Endothelial cell of umbilical vein (primary cell): ENCODE measurements at regions of chr1 and their contacts with region 1.

Region 1: GRCh38 chr1:169546087-169546995 is 39.9 kb downstream of the F5 start:
- DNase-seq: peak; percentile 66
- H3K4me3 ChIP-seq: no peak overlapping the region
- H3K27ac ChIP-seq: no peak overlapping the region
- H3K4me1 ChIP-seq: no peaks in the 10 kb centered on the region
- H3K27me3 ChIP-seq: peaks cover 0 to 2% of the 10 kb centered on the region in 2 experiments
- CTCF ChIP-seq: peak; percentile 63 to 66
- POLR2A ChIP-seq: no peak

Region 2: DNA sequence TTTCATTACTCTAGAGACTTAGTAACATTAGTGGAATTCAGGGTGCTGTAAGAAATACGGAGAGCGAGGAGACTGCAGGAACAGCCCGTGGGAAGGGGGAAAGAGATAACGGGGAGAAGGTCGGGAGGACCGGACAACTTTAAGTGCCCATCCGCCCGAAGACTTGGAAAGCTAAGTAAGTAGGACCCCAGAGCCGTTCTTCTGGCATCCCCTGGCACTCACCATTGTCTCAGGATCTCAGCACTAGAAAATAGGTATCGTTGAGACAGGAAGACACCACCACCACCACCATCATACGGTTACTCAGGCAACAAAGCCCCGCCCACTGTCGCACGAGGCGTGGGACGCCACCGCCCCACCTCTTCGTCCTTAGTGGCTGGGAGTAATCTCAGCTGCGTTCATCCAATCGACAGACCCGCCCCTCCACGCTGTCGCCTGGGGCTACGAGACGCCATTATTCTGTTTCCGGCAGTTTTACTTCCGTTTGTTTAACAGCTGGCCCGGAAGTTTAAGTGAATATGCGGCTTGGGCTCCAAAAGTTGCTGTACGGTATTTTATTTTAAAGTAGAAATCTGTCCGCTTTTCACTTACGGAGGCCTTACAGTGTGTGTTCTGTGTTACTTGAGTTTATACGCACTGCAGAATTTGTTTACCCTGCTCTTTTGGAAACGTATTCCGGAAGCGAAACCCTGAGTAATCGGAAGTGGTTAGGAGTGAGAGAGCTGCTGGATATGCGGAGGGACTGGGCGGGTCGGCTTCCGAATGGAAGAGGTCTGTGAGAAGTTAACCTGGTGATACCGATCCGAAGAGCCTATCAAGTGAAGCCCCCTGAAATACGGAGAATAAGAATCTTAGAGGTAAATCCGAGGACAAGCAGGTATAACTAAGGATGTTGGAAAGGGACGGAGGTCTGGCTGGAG is 178.6 kb before region 1 on chr1 and contains the starts of genes BLZF1 and NME7:
- CTCF ChIA-PET with region 1: interaction called, 14 read pairs
- POLR2A ChIA-PET with region 1: no interaction called
- dilution Hi-C with region 1: no loop called
- intact Hi-C with region 1: loop called (anchors 2 kb)
- DNase-seq: peak; percentile 98
- H3K4me3 ChIP-seq: peak within 1 kb of the TSS; percentile 97 to 100 (median 98)
- H3K27ac ChIP-seq: peak within 1 kb of the TSS; percentile 96
- H3K4me1 ChIP-seq: peaks cover 19% of the 10 kb centered on the region
- H3K27me3 ChIP-seq: no peaks in the 10 kb centered on the region
- CTCF ChIP-seq: no peak
- POLR2A ChIP-seq: peak; percentile 84
- total RNA-seq, gene BLZF1: 19.7 and 21.2 TPM in 2 replicates
- total RNA-seq, gene NME7: 25.0 and 25.3 TPM in 2 replicates

Region 3: DNA sequence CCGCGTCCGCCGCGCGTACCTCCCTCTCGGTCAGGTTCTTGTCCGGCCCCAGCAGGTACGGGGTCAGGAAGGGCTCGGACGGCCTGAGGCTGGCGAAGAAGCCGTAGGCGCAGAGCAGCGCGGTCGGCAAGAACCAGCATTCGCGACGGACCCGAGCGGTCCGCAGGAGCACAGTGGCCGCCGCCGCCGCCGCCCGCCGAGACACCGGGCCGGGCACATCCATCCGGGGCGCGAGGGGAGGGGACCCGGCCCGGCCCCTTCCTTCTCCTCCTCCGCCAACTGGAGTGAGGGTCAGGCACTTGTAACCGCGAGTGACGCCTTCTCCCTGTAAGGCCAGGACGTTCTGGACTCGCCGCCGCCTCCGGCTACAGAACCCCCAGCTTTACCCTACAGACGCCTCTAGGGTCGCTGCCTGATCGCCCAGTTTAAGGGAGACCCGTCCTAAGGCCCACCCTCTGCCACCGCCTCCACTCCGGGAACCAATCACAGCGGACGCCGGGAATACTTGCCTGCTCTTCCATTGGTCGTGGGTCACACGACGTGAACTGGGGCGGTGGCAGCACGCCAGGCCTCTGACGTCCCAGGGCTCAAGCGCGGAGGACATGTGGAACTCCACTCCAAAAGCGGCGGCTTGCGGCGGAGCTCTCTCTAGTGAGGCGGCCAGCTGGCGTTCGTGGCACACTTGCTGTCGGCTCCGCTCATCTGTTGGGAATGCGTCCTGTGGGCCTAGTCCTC is 60.6 kb before region 1 on chr1 and contains the start of gene SLC19A2:
- CTCF ChIA-PET with region 1: interaction called, 22 read pairs
- POLR2A ChIA-PET with region 1: no interaction called
- dilution Hi-C with region 1: no loop called
- intact Hi-C with region 1: loop called (anchors 1 kb)
- DNase-seq: peak; percentile 99
- H3K4me3 ChIP-seq: peak within 1 kb of the TSS; percentile 37 to 80 (median 78)
- H3K27ac ChIP-seq: peak within 1 kb of the TSS; percentile 96
- H3K4me1 ChIP-seq: peaks cover 31% of the 10 kb centered on the region
- H3K27me3 ChIP-seq: no peaks in the 10 kb centered on the region
- CTCF ChIP-seq: peak in 1 of 2 donors; percentile 31
- POLR2A ChIP-seq: peak; percentile 87
- total RNA-seq, gene SLC19A2: 5.4 and 7.0 TPM in 2 replicates

Region 4: GRCh38 chr1:169601093-169601881 is 54.9 kb after region 1 on chr1:
- CTCF ChIA-PET with region 1: interaction called, 7 read pairs
- POLR2A ChIA-PET with region 1: no interaction called
- dilution Hi-C with region 1: no loop called
- intact Hi-C with region 1: loop called (anchors 1 kb)
- DNase-seq: peak; percentile 66
- H3K4me3 ChIP-seq: no peak overlapping the region
- H3K27ac ChIP-seq: no peak overlapping the region
- H3K4me1 ChIP-seq: no peaks in the 10 kb centered on the region
- H3K27me3 ChIP-seq: peaks cover 0 to 6% of the 10 kb centered on the region in 2 experiments
- CTCF ChIP-seq: peak; percentile 20 to 31
- POLR2A ChIP-seq: no peak

Region 5: GRCh38 chr1:169648709-169649108 is 102.4 kb after region 1 on chr1:
- CTCF ChIA-PET with region 1: no interaction called
- POLR2A ChIA-PET with region 1: no interaction called
- dilution Hi-C with region 1: no loop called
- intact Hi-C with region 1: no loop called
- DNase-seq: no peak
- H3K4me3 ChIP-seq: no peak overlapping the region
- H3K27ac ChIP-seq: no peak overlapping the region
- H3K4me1 ChIP-seq: no peaks in the 10 kb centered on the region
- H3K27me3 ChIP-seq: no peaks in the 10 kb centered on the region
- CTCF ChIP-seq: no peak
- POLR2A ChIP-seq: no peak